ENCODE measurements at regions of chr19 and their contacts with region 1.

Region 1: GRCh38 chr19:46030812-46031550 is 8.1 kb upstream of the PGLYRP1 start:
- DNase-seq: no peak
- ATAC-seq: no peak
- H3K4me3 ChIP-seq: no peak overlapping the region
- H3K4me3 Mint-ChIP-seq: no peak overlapping the region
- H3K27ac ChIP-seq: no peak overlapping the region
- H3K27ac Mint-ChIP-seq: no peak overlapping the region
- H3K4me1 ChIP-seq: peaks cover 4% of the 10 kb centered on the region
- H3K4me1 Mint-ChIP-seq: peaks cover 12% of the 10 kb centered on the region
- H3K27me3 ChIP-seq: peaks cover 0 to 6% of the 10 kb centered on the region in 2 experiments
- H3K27me3 Mint-ChIP-seq: peaks cover 24% of the 10 kb centered on the region
- CTCF ChIP-seq: no peak

Region 2: GRCh38 chr19:45902651-45903625 is 128.0 kb before region 1 on chr19:
- CTCF ChIA-PET with region 1: no interaction called
- POLR2A ChIA-PET with region 1: no interaction called
- intact Hi-C with region 1: no loop called
- DNase-seq: peak; percentile 98 to 100 (median 99)
- ATAC-seq: peak; percentile 82
- H3K4me3 ChIP-seq: peak overlapping the region; percentile 76 to 83
- H3K4me3 Mint-ChIP-seq: peak overlapping the region; percentile 92
- H3K27ac ChIP-seq: peak overlapping the region; percentile 64 to 77
- H3K27ac Mint-ChIP-seq: peak overlapping the region; percentile 72
- H3K4me1 ChIP-seq: peaks cover 17% of the 10 kb centered on the region
- H3K4me1 Mint-ChIP-seq: peaks cover 26% of the 10 kb centered on the region
- H3K27me3 ChIP-seq: no peaks in the 10 kb centered on the region
- H3K27me3 Mint-ChIP-seq: no peaks in the 10 kb centered on the region
- CTCF ChIP-seq: no peak

Region 3: DNA sequence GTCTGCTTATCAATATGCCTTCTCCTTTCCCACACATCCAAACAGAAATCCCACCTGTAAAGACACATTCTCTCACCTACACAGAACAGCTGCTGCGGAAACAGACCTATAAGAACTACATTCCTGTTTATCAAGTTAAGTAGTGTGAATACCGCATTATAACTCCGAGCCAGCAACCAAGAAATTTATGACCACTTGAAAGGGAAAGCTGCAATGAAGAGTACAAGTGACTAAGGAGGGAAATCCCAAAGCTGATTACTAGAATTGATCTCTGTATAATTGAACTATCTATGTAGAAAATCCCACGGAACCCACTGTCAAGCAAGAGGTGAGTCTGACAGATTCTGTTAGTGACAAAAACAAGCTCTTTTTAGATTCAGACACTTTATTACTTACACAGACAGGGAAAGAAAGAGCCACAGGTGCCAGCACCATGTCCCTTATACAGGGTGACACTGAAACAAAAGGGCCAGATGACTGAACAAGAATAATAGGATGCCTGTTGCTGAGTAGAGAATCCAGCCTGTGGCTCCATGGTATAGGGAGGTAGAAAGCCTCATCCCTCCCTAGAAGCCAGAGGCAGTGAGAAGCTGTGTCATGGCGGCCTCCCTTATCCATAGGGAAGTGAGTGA is 11.4 kb after region 1 on chr19:
- CTCF ChIA-PET with region 1: interaction called, 17 read pairs
- POLR2A ChIA-PET with region 1: no interaction called
- intact Hi-C with region 1: no loop called
- DNase-seq: no peak
- ATAC-seq: no peak
- H3K4me3 ChIP-seq: no peak overlapping the region
- H3K4me3 Mint-ChIP-seq: no peak overlapping the region
- H3K27ac ChIP-seq: no peak overlapping the region
- H3K27ac Mint-ChIP-seq: no peak overlapping the region
- H3K4me1 ChIP-seq: no peaks in the 10 kb centered on the region
- H3K4me1 Mint-ChIP-seq: no peaks in the 10 kb centered on the region
- H3K27me3 ChIP-seq: peaks cover 7 to 8% of the 10 kb centered on the region in 2 experiments
- H3K27me3 Mint-ChIP-seq: peaks cover 57% of the 10 kb centered on the region
- CTCF ChIP-seq: no peak

Region 4: DNA sequence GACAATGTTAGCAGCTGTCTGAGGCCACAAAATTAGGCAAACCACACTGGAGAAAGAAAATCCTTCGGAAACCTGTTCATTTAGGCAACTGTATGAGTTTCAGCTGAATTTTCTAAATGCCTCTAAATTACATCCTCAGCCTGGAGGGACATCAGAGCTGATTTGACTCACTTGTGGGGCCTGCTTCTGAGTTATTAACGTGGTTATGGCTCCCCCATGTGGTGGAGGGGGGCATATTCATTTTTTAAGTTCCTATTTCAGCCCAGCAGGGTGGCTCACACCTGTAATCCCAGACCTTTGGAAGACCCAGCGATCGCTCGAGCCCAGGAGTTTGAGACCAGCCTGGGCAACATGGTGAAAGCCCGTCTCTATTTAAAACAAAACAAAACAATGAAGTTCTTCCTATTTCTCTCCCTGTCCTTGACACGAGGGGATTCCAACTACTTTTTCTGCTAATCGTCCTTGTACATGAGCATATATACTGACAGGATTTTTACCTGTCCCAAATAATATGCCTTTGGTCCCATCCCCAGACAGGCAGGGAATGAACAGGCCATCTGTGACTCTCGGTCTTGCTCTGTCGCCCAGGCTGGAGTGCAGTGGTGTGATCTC is 234.3 kb after region 1 on chr19:
- CTCF ChIA-PET with region 1: interaction called, 129 read pairs
- POLR2A ChIA-PET with region 1: interaction called, 5 read pairs
- intact Hi-C with region 1: loop called in 1 of 2 experiments (anchors 1 kb)
- DNase-seq: peak; percentile 37 to 87 (median 67)
- ATAC-seq: peak; percentile 58
- H3K4me3 ChIP-seq: no peak overlapping the region
- H3K4me3 Mint-ChIP-seq: no peak overlapping the region
- H3K27ac ChIP-seq: no peak overlapping the region
- H3K27ac Mint-ChIP-seq: no peak overlapping the region
- H3K4me1 ChIP-seq: peaks cover 14% of the 10 kb centered on the region
- H3K4me1 Mint-ChIP-seq: peaks cover 17% of the 10 kb centered on the region
- H3K27me3 ChIP-seq: peaks cover 2 to 26% of the 10 kb centered on the region in 2 experiments
- H3K27me3 Mint-ChIP-seq: peaks cover 35% of the 10 kb centered on the region
- CTCF ChIP-seq: peak; percentile 90

Region 5: GRCh38 chr19:46271481-46272197 is 240.7 kb after region 1 on chr19:
- CTCF ChIA-PET with region 1: interaction called, 129 read pairs
- POLR2A ChIA-PET with region 1: no interaction called
- intact Hi-C with region 1: no loop called
- DNase-seq: no peak
- ATAC-seq: no peak
- H3K4me3 ChIP-seq: no peak overlapping the region
- H3K4me3 Mint-ChIP-seq: no peak overlapping the region
- H3K27ac ChIP-seq: no peak overlapping the region
- H3K27ac Mint-ChIP-seq: no peak overlapping the region
- H3K4me1 ChIP-seq: no peaks in the 10 kb centered on the region
- H3K4me1 Mint-ChIP-seq: peaks cover 9% of the 10 kb centered on the region
- H3K27me3 ChIP-seq: peaks cover 6 to 12% of the 10 kb centered on the region in 2 experiments
- H3K27me3 Mint-ChIP-seq: peaks cover 44% of the 10 kb centered on the region
- CTCF ChIP-seq: no peak

Region 6: GRCh38 chr19:46487802-46488445 is 456.9 kb after region 1 on chr19:
- CTCF ChIA-PET with region 1: interaction called, 4 read pairs
- POLR2A ChIA-PET with region 1: no interaction called
- intact Hi-C with region 1: loop called in 1 of 2 experiments (anchors 1 kb)
- DNase-seq: peak; percentile 58 to 86 (median 73)
- ATAC-seq: peak; percentile 87
- H3K4me3 ChIP-seq: no peak overlapping the region
- H3K4me3 Mint-ChIP-seq: no peak overlapping the region
- H3K27ac ChIP-seq: no peak overlapping the region
- H3K27ac Mint-ChIP-seq: no peak overlapping the region
- H3K4me1 ChIP-seq: peaks cover 33% of the 10 kb centered on the region
- H3K4me1 Mint-ChIP-seq: peaks cover 22% of the 10 kb centered on the region
- H3K27me3 ChIP-seq: peaks cover 42 to 46% of the 10 kb centered on the region in 2 experiments
- H3K27me3 Mint-ChIP-seq: peaks cover 58% of the 10 kb centered on the region
- CTCF ChIP-seq: peak; percentile 76

Measured in CD8-positive, alpha-beta T cell (primary cell).